Brain microvascular endothelial cell (primary cell): ENCODE measurements at regions of chr11 and their contacts with region 1.

Region 1: GRCh38 chr11:93921695-93922468 is 71.5 kb upstream of the VSTM5 start:
- DNase-seq: peak; percentile 34
- H3K4me3 ChIP-seq: no peak overlapping the region
- H3K27ac ChIP-seq: no peak overlapping the region
- H3K27me3 ChIP-seq: no peaks in the 10 kb centered on the region
- CTCF ChIP-seq: peak; percentile 93

Region 2: GRCh38 chr11:94449437-94449836 is 527.6 kb after region 1 on chr11:
- in situ Hi-C with region 1: loop called (anchors 25 kb)
- DNase-seq: peak; percentile 55
- H3K4me3 ChIP-seq: no peak overlapping the region
- H3K27ac ChIP-seq: no peak overlapping the region
- H3K27me3 ChIP-seq: no peaks in the 10 kb centered on the region
- CTCF ChIP-seq: no peak